PC-9 (cell line): ENCODE measurements at regions of chr7 and their contacts with region 1.

Region 1: GRCh38 chr7:31373337-31374289 is 33.1 kb upstream of the NEUROD6 start:
- DNase-seq: peak in 1 of 2 experiments; percentile 62
- H3K4me3 ChIP-seq: no peak overlapping the region
- H3K27ac ChIP-seq: no peak overlapping the region
- H3K4me1 ChIP-seq: no peaks in the 10 kb centered on the region
- H3K27me3 ChIP-seq: peaks cover 58% of the 10 kb centered on the region
- CTCF ChIP-seq: peak; percentile 92

Region 2: DNA sequence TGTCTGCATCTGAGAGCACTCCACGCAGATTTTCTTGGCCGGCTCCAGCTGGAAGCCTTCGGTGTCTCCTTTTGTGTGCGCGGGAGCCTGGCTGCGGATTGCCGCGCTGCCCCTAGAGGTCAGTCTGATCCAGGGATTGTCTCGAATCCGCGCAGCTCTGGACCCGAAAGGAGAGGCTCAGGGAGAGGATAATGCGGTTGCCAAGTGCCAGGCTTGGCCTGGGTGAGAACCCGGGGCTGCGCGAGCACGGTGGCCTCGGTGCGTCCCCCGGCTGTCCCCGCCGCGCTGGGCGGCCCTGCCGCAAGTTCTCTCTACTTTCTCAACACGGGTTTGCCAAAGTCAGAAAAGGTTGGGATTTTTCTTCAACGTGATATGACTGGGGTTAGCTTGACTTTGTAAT is 180.6 kb before region 1 on chr7:
- CTCF ChIA-PET with region 1: no interaction called
- POLR2A ChIA-PET with region 1: no interaction called
- intact Hi-C with region 1: loop called (anchors 2 kb)
- DNase-seq: peak in 1 of 2 experiments; percentile 52
- H3K4me3 ChIP-seq: no peak overlapping the region
- H3K27ac ChIP-seq: no peak overlapping the region
- H3K4me1 ChIP-seq: no peaks in the 10 kb centered on the region
- H3K27me3 ChIP-seq: peaks cover 26% of the 10 kb centered on the region
- CTCF ChIP-seq: peak; percentile 81

Region 3: DNA sequence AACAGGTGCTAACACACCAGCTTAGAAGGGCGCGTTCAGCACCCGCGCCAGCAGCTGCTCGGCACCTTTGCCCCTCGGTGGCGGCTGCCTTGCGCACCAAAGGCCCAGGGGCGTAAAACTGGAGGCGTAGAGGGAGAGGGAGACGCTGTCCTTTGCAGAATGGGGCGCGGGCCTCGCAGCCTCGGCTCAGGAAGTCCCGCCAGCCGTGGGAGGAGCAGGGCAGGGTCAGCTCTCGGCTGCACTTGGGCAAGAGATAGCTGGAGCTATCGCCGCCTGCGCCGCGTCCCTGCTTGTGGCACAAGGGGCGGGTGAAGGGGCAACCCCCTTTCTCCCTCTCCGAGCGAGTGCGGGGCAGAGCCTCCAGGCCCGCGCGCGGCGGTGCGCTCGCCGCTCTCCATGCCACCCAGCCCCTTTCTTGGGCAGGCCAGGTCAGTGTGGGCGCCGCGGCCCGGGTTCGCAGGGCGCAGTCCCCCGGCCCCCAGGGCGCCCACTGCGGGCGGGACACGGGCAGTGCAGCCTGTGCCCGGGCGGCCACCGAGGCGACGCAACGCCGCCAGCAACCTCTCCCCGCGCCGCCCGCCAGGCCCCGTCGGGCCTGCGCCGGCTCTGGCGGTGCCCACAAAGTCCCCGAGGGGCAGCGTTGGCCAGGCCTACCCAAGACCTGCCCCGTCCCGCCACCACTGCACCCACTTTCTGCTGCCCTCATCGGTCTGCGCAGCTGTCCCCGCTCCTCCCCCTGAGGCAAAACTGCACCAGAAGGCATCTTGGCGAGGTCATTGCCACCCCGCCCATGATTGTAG is 37.2 kb before region 1 on chr7:
- CTCF ChIA-PET with region 1: no interaction called
- POLR2A ChIA-PET with region 1: no interaction called
- intact Hi-C with region 1: no loop called
- DNase-seq: no peak
- H3K4me3 ChIP-seq: no peak overlapping the region
- H3K27ac ChIP-seq: no peak overlapping the region
- H3K4me1 ChIP-seq: no peaks in the 10 kb centered on the region
- H3K27me3 ChIP-seq: peaks cover 37% of the 10 kb centered on the region
- CTCF ChIP-seq: no peak

Region 4: GRCh38 chr7:31443457-31443856 is 69.8 kb after region 1 on chr7:
- CTCF ChIA-PET with region 1: interaction called, 7 read pairs
- POLR2A ChIA-PET with region 1: no interaction called
- intact Hi-C with region 1: loop called (anchors 1 kb)
- DNase-seq: peak; percentile 16 to 66
- H3K4me3 ChIP-seq: no peak overlapping the region
- H3K27ac ChIP-seq: no peak overlapping the region
- H3K4me1 ChIP-seq: no peaks in the 10 kb centered on the region
- H3K27me3 ChIP-seq: 0 out of 2 replicates have a peak, but pooled peaks cover 17% of the 10 kb centered on the region
- CTCF ChIP-seq: peak; percentile 98

Region 5: DNA sequence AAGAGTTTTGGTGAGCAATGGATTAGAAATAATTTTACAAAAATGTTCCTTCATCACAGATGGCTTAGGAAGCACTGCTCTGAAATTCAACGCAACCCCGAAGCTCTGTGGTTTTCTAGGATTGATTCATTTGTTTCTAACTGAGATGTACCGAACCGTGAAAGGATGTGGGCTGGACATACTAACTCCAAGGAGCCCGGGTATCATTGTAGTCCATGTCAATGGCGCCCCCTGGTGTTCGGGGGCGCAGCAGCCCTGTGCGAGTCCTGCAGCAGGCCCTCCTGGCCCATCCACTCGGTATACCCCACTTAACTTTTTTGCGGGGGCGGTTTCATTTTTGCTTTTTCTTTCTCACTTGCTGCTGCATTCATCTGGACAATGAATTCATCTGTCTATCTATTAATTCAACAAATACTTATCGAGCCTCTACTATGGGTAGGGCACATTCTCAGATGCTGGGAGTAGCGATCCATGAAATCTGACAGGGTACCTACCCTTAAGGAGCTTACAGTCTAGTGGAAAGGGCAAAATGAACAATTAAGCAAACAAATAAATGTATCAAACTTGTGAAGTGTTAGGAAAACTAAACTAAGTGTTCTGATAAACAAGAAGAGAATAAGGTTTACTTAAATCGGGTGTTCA is 115.1 kb after region 1 on chr7:
- CTCF ChIA-PET with region 1: interaction called, 4 read pairs
- POLR2A ChIA-PET with region 1: no interaction called
- intact Hi-C with region 1: loop called (anchors 1 kb)
- DNase-seq: peak in 1 of 2 experiments; percentile 59
- H3K4me3 ChIP-seq: no peak overlapping the region
- H3K27ac ChIP-seq: no peak overlapping the region
- H3K4me1 ChIP-seq: no peaks in the 10 kb centered on the region
- H3K27me3 ChIP-seq: peaks cover 15% of the 10 kb centered on the region
- CTCF ChIP-seq: peak; percentile 91

Region 6: DNA sequence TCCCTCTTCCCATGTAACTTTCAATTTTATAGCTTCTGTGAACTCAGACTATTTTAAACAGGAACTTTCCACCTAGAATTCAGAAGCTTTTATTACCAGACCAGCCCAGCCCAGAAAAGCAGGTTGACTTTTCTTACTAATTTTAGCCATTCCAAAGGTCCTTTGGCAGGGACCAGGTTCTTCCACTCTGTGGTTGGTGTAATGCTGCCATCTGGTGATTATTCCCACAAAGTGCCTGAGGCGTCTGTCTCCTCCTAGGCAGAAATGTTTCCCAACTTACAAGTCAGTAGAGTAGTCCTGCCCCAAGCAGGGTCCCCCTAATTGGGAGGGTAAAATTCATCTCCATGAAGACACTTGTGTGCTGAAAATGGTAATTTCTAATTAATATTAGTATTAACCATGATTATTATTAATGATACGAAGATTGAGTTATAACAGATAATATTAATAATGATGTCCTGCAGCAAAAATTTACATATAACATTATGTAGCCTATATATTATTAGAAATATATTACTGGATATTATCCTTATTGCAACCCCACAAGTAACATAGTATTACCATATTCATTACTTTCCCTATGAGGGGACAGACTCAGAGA is 260.4 kb after region 1 on chr7:
- CTCF ChIA-PET with region 1: no interaction called
- POLR2A ChIA-PET with region 1: no interaction called
- intact Hi-C with region 1: loop called (anchors 1 kb)
- DNase-seq: peak; percentile 50 to 53
- H3K4me3 ChIP-seq: no peak overlapping the region
- H3K27ac ChIP-seq: no peak overlapping the region
- H3K4me1 ChIP-seq: no peaks in the 10 kb centered on the region
- H3K27me3 ChIP-seq: peaks cover 23% of the 10 kb centered on the region
- CTCF ChIP-seq: peak; percentile 74

Region 7: DNA sequence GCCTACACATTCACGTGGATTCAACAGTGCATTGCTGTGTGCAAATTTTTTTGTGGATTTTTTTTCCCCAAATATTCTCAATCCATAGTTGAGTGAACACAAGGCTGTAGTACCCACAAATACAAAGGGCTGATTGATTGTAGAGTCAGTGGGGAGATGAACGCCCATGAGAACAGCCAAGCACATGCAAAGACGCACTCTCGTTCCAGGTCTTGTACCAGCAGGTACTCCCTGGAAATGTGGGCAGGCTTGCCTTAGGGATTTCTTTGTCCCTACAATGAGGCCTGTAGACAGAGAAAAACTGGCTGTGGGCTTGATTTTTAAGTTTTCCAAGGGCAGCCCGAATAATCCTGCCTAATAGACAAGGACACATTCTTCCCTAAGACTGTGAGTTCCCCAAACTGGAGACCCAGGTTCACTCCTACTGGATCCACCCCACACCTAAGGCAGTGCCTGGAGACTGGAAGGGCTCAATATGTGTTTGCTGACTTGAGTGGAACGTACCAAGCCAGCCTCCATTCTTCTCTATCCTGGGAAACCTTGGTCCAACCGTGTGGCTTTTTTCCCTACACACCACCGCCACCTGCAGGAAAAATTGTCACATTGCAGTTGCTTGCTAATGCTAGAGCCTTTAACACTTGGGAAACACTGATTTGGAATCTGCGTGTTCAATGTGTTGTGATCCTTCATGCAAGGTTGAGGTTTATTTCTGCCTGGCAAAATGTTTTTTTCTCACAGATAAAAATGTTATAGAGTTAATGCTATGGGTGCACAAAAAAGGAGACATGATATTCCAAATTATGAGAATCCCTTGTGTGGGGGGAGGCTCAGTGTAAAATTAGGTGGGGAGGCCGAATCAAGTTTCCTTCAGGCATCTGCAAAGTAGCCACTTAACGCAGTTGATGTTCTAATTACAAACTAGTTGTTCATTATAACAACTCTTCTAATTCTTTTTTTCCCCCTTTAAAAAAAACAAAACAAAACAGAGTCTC is 362.7 kb after region 1 on chr7:
- CTCF ChIA-PET with region 1: no interaction called
- POLR2A ChIA-PET with region 1: no interaction called
- intact Hi-C with region 1: loop called (anchors 1 kb)
- DNase-seq: peak; percentile 42 to 51
- H3K4me3 ChIP-seq: no peak overlapping the region
- H3K27ac ChIP-seq: no peak overlapping the region
- H3K4me1 ChIP-seq: no peaks in the 10 kb centered on the region
- H3K27me3 ChIP-seq: peaks cover 44% of the 10 kb centered on the region
- CTCF ChIP-seq: peak; percentile 95